Left colon (tissue), 2 donors: ENCODE measurements at regions of chr6 and their contacts with region 1.

Region 1: DNA sequence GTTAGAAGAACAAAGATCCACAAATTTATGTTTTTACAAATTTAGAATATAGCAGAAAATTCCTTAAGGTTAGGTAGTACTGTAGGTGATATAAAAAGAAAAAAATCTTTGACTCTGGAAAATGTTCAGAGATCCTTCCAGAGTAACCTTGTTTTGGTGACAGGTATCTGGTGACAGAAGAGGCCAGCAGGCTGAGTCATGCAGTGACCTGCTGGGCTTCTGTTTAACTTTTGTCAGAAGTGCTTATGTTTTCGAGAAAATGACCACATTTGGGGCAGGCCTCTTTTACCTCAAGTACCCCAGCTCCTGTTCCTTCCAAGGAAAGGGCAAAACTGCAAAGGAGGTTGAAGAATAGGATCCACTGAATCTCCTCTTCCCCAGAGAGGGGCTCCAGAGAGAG is 10.5 kb upstream of the CLDN20 start:
- DNase-seq: no peak
- ATAC-seq: no peak

Region 2: DNA sequence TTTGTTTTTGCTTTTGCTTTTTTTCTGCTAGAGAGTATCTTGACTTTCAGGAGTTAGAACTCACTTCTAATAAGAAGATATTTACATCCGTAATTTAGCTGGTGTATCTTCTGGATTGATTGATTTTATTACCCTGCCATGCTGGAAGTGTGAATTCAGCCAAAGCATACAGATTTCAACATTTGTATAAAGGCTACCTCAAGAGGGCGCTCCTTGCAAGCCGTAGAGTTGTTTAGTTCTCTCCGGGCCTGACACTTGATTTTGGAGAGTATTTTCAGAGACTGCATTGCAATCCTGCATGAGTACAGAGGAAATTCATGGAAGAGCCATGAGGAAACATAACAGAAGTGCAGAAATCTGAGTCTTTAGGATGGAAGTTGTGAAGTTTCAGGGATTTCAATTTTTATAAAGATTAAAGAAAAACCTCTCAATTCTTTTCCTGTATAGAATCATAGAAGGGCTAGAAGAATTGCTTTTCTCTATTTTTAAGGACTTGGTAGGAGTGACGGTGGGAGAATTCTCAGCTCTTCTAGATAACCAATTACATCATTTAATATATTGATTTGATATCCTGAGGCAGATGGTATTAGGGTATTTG is 324.9 kb before region 1 on chr6:
- intact Hi-C with region 1: loop called in 1 of 2 experiments (anchors 10 kb)
- DNase-seq: peak; percentile 33 to 67
- ATAC-seq: peak; percentile 76